Calu3 (cell line): ENCODE measurements at regions of chr19 and their contacts with region 1.

Region 1: GRCh38 chr19:38759590-38760003 is 13.7 kb downstream of the LGALS7 start:
- DNase-seq: peak; percentile 79
- H3K4me3 Mint-ChIP-seq: peak overlapping the region; percentile 34
- H3K27ac Mint-ChIP-seq: peak overlapping the region; percentile 99
- H3K4me1 Mint-ChIP-seq: peaks cover 52% of the 10 kb centered on the region
- H3K27me3 Mint-ChIP-seq: no peaks in the 10 kb centered on the region
- CTCF ChIP-seq: no peak

Region 2: DNA sequence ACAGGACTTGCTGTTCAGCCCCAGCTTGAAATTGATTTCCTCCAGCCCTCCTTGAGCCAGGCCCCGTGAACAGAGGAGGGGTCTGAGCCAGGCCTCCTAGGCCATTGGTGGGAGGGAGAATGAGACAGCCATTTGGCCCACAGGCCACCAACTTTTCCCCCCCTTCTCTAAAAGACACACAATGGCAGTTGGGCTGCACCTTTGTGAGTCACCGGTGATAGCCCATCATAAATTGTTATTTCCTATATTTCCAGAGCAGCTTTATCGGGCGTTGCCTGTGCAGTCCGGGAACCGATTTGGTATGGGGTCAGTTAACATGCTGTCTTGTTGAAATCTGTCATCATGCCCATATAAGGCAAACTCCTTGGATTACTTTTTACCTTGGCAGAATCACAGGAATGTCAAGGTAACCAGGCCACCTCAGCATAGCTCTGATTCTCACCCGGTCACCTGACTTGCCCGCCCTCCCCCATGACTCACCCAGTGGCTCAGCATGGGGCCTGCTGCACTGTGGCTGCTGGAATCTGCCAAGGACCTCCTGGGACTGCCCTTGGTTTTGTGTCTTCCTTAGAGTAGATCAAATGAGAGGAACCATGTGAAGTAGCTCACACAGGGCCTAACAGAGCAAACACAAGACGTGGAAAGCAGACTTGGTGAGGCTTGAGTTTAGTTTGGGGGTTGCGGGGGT is 76.1 kb before region 1 on chr19:
- CTCF ChIA-PET with region 1: no interaction called
- intact Hi-C with region 1: no loop called
- DNase-seq: peak; percentile 99
- H3K4me3 Mint-ChIP-seq: peak overlapping the region; percentile 61
- H3K27ac Mint-ChIP-seq: peak overlapping the region; percentile 100
- H3K4me1 Mint-ChIP-seq: peaks cover 93% of the 10 kb centered on the region
- H3K27me3 Mint-ChIP-seq: no peaks in the 10 kb centered on the region
- CTCF ChIP-seq: no peak

Region 3: GRCh38 chr19:38769635-38770211 is 10.1 kb after region 1 on chr19:
- CTCF ChIA-PET with region 1: no interaction called
- intact Hi-C with region 1: no loop called
- DNase-seq: no peak
- H3K4me3 Mint-ChIP-seq: no peak overlapping the region
- H3K27ac Mint-ChIP-seq: no peak overlapping the region
- H3K4me1 Mint-ChIP-seq: no peaks in the 10 kb centered on the region
- H3K27me3 Mint-ChIP-seq: no peaks in the 10 kb centered on the region
- CTCF ChIP-seq: no peak

Region 4: GRCh38 chr19:38799071-38799744 is 39.6 kb after region 1 on chr19:
- CTCF ChIA-PET with region 1: interaction called, 5 read pairs
- intact Hi-C with region 1: loop called (anchors 5 kb)
- DNase-seq: no peak
- H3K4me3 Mint-ChIP-seq: peak overlapping the region; percentile 48
- H3K27ac Mint-ChIP-seq: no peak overlapping the region
- H3K4me1 Mint-ChIP-seq: no peaks in the 10 kb centered on the region
- H3K27me3 Mint-ChIP-seq: no peaks in the 10 kb centered on the region
- CTCF ChIP-seq: no peak

Region 5: DNA sequence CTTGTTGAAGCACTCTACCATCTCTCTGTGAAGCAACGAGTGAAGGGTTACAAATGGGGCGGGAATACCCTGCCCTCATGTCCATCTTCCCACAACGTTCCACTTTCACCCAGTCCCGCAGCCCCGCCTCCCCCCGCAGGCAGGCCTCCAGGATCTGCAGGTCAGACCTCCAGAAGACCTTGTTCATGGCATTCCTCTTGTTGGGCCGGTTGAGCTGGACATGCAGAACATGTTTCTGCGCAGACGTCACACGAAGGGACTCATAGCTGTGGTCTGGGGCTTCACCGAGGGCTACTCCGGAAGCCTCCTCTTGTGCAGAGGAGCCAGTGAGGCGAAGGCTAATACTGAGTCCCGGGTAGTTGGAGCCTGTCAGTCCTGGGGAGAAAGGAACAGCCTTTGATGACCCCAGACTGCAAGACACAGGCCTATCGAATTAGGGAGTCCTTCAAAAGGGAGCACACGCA is 71.6 kb after region 1 on chr19:
- CTCF ChIA-PET with region 1: interaction called, 5 read pairs
- intact Hi-C with region 1: loop called (anchors 5 kb)
- DNase-seq: peak; percentile 93
- H3K4me3 Mint-ChIP-seq: peak overlapping the region; percentile 84
- H3K27ac Mint-ChIP-seq: peak overlapping the region; percentile 96
- H3K4me1 Mint-ChIP-seq: peaks cover 26% of the 10 kb centered on the region
- H3K27me3 Mint-ChIP-seq: no peaks in the 10 kb centered on the region
- CTCF ChIP-seq: no peak